Naive thymus-derived CD4-positive, alpha-beta T cell (primary cell): ENCODE measurements at regions of chr5 and their contacts with region 1.

Region 1: DNA sequence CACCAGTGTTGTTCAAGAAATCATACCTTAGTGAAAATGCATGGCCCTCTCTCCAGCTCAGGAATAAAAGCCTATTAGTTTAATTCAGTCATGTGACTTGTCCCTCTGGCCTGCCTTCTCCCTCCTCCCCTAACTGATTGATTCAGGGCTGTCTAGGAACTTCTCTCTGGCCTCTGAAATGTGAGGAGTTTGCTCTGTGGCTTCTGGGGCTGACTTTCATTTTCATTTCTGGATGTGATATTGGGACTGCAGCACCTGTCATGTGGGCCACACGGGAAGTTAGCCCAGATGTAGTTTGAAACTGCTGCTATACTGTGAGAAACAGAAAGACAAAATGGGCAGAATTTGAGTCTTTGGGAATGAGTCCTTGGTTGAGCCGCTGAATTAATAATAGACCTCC is 44.8 kb downstream of the PARP8 start:
- DNase-seq: peak in 8 of 9 donors; percentile 48 to 82 (median 74)
- ATAC-seq: peak; percentile 94
- H3K4me3 ChIP-seq: peak overlapping the region; percentile 31
- H3K4me3 Mint-ChIP-seq: peak overlapping the region; percentile 78 to 89 (median 85)
- H3K27ac ChIP-seq: peak overlapping the region; percentile 76
- H3K27ac Mint-ChIP-seq: peak overlapping the region; percentile 82 to 98 (median 94)
- H3K4me1 ChIP-seq: peaks cover 40 to 72% of the 10 kb centered on the region in 2 donors
- H3K4me1 Mint-ChIP-seq: peaks cover 57 to 96% (median 87%) of the 10 kb centered on the region in 7 donors
- H3K27me3 ChIP-seq: no peaks in the 10 kb centered on the region
- H3K27me3 Mint-ChIP-seq: no peaks in the 10 kb centered on the region

Region 2: DNA sequence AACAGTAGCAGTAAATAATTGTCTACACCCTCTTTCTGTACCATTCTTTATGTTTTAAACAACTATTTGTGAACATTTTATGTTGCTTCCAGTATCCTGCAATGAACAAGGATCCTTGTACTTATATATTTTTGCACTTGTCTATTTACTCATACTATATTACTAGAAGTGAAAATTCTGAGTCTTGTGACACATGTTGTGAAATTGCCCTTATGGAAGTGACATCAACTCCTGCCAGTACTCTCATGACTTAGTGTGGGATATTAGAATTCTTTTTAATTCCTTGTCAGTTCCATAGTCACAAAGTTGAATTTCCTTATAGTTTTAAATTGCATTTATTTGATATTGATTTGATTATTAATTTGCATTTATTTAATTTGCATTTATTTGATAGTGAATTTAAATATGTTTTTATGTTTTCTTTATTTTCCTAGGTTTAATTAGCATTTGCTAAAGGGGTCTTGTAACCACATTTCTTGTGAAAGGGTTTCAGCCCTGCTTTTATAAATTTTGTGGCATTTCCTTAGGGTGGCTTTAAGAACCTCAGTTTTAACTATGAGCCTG is 17.2 kb before region 1 on chr5:
- CTCF ChIA-PET with region 1: no interaction called
- POLR2A ChIA-PET with region 1: interaction called, 7 read pairs
- intact Hi-C with region 1: loop called in 1 of 2 experiments (anchors 2 kb)
- DNase-seq: no peak
- ATAC-seq: peak; percentile 51
- H3K4me3 ChIP-seq: no peak overlapping the region
- H3K4me3 Mint-ChIP-seq: peak overlapping the region in 2 of 10 donors; percentile 0 to 7
- H3K27ac ChIP-seq: no peak overlapping the region
- H3K27ac Mint-ChIP-seq: peak overlapping the region in 2 of 9 donors; percentile 17 to 43
- H3K4me1 ChIP-seq: peaks cover 24 to 59% of the 10 kb centered on the region in 2 donors
- H3K4me1 Mint-ChIP-seq: peaks cover 28 to 48% (median 37%) of the 10 kb centered on the region in 7 donors
- H3K27me3 ChIP-seq: no peaks in the 10 kb centered on the region
- H3K27me3 Mint-ChIP-seq: no peaks in the 10 kb centered on the region

Region 3: GRCh38 chr5:50727149-50727496 is 15.8 kb after region 1 on chr5:
- CTCF ChIA-PET with region 1: interaction called, 3 read pairs
- POLR2A ChIA-PET with region 1: interaction called, 5 read pairs
- intact Hi-C with region 1: loop called in 1 of 2 experiments (anchors 2 kb)
- DNase-seq: no peak
- ATAC-seq: peak; percentile 63
- H3K4me3 ChIP-seq: no peak overlapping the region
- H3K4me3 Mint-ChIP-seq: peak overlapping the region in 9 of 10 donors; percentile 27 to 69 (median 58)
- H3K27ac ChIP-seq: no peak overlapping the region
- H3K27ac Mint-ChIP-seq: peak overlapping the region in 8 of 9 donors; percentile 27 to 87 (median 62)
- H3K4me1 ChIP-seq: peaks cover 26 to 38% of the 10 kb centered on the region in 2 donors
- H3K4me1 Mint-ChIP-seq: peaks cover 35 to 88% (median 71%) of the 10 kb centered on the region in 7 donors
- H3K27me3 ChIP-seq: no peaks in the 10 kb centered on the region
- H3K27me3 Mint-ChIP-seq: no peaks in the 10 kb centered on the region

Region 4: GRCh38 chr5:50744776-50745175 is 33.5 kb after region 1 on chr5:
- CTCF ChIA-PET with region 1: interaction called, 3 read pairs
- POLR2A ChIA-PET with region 1: interaction called, 3 read pairs
- intact Hi-C with region 1: loop called (anchors 1 kb)
- DNase-seq: peak in 5 of 9 donors; percentile 26 to 48 (median 30)
- ATAC-seq: peak; percentile 65
- H3K4me3 ChIP-seq: peak overlapping the region; percentile 43
- H3K4me3 Mint-ChIP-seq: peak overlapping the region; percentile 82 to 98 (median 88)
- H3K27ac ChIP-seq: peak overlapping the region; percentile 72
- H3K27ac Mint-ChIP-seq: peak overlapping the region; percentile 78 to 98 (median 91)
- H3K4me1 ChIP-seq: peaks cover 39% of the 10 kb centered on the region in 2 donors
- H3K4me1 Mint-ChIP-seq: peaks cover 56 to 95% (median 86%) of the 10 kb centered on the region in 7 donors
- H3K27me3 ChIP-seq: no peaks in the 10 kb centered on the region
- H3K27me3 Mint-ChIP-seq: no peaks in the 10 kb centered on the region